ENCODE measurements at regions of chr15 and their contacts with region 1.

Region 1: GRCh38 chr15:65054333-65055200 is 9.4 kb downstream of the SLC51B start:
- DNase-seq: peak; percentile 63
- H3K4me3 Mint-ChIP-seq: no peak overlapping the region
- H3K27ac Mint-ChIP-seq: no peak overlapping the region
- H3K4me1 Mint-ChIP-seq: peaks cover 4% of the 10 kb centered on the region
- H3K27me3 Mint-ChIP-seq: no peaks in the 10 kb centered on the region
- CTCF ChIP-seq: peak; percentile 83

Region 2: GRCh38 chr15:64950888-64951287 is 103.7 kb before region 1 on chr15:
- CTCF ChIA-PET with region 1: no interaction called
- POLR2A ChIA-PET with region 1: no interaction called
- intact Hi-C with region 1: no loop called
- DNase-seq: no peak
- H3K4me3 Mint-ChIP-seq: no peak overlapping the region
- H3K27ac Mint-ChIP-seq: peak overlapping the region; percentile 10
- H3K4me1 Mint-ChIP-seq: no peaks in the 10 kb centered on the region
- H3K27me3 Mint-ChIP-seq: no peaks in the 10 kb centered on the region
- CTCF ChIP-seq: no peak

Region 3: DNA sequence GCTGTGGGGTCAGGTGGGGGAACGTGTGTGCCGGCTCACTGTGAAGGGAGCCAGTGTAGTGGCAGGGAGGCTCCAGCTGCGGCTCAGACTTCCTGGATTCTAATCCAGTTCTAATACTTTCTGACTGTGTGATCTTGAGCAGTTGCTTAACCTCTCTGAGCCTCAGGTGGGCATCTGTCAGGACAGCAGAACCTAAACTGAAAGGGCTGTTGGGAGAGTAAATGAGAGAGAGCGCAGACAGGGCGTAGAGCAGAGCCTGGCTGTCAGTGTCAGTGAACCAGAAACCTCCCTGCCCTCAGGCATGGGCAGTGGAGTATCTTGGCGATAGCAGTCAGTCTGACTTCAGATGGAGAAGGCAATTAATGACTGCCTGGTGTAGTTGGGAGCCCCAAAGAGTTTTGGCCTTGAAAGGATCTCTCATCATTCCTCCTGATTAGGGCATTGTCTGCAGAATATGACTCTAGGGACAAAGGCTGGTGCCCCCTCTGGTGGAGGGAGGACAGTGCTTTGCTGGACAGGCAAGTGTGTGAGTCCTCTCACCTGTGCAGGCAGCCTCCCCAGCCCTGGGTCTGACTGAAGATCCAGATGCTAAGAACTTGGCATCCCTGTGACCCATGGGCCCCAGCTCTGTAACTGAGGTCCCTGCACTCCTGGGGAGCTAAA is 31.6 kb after region 1 on chr15:
- CTCF ChIA-PET with region 1: interaction called, 22 read pairs
- POLR2A ChIA-PET with region 1: interaction called, 3 read pairs
- intact Hi-C with region 1: loop called (anchors 1 kb)
- DNase-seq: peak; percentile 66
- H3K4me3 Mint-ChIP-seq: no peak overlapping the region
- H3K27ac Mint-ChIP-seq: no peak overlapping the region
- H3K4me1 Mint-ChIP-seq: peaks cover 7% of the 10 kb centered on the region
- H3K27me3 Mint-ChIP-seq: peaks cover 38% of the 10 kb centered on the region
- CTCF ChIP-seq: peak; percentile 51

Region 4: DNA sequence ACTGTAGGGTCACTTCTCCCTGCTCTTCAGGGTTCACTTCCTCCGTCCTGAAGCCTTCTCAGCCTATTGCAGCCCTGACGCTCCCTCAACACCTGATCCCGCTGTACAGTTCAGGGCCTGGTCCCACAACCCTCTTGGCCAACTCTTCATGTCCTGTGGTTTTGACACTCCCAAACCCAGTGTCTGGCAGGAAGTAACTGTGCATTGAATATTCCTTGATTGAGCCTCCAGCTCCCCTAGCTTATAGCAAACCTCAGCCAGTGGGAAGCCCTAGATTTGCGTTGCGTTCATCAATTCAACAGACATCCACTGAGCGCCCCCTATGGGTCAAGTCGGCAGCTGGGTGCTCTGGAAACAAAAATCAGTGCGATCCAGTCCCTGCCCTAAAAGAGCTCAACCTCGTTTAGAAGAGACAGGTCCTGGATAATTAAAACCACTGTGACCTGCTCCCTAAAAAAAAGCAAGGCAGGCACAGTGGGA is 46.9 kb after region 1 on chr15:
- CTCF ChIA-PET with region 1: interaction called, 7 read pairs
- POLR2A ChIA-PET with region 1: no interaction called
- intact Hi-C with region 1: loop called (anchors 1 kb)
- DNase-seq: peak; percentile 61
- H3K4me3 Mint-ChIP-seq: no peak overlapping the region
- H3K27ac Mint-ChIP-seq: no peak overlapping the region
- H3K4me1 Mint-ChIP-seq: no peaks in the 10 kb centered on the region
- H3K27me3 Mint-ChIP-seq: no peaks in the 10 kb centered on the region
- CTCF ChIP-seq: peak; percentile 78

Measured in MCF 10A (cell line).